Endothelial cell of umbilical vein (primary cell): ENCODE measurements at regions of chr11 and their contacts with region 1.

Region 1: DNA sequence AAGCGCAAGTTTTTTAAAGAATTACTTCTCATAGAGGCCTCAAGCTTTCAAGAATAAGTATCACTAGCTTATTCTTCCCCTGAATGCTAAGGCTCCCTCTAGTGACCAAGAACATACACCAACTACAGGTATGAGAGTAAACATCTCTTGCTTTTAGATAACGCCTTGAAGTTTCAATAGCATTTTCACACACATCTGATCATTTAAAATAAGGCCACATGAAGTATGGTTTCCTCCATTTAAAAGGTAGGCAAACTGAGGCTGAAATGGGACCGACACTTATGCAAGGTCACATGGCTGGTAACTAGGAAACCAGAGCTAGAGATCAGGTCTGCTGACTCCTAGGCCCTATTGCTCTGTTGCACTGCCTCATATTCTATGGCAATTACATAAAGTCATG is 66.5 kb downstream of the CCDC34 start:
- DNase-seq: peak; percentile 66
- H3K4me3 ChIP-seq: no peak overlapping the region
- H3K27ac ChIP-seq: no peak overlapping the region
- H3K4me1 ChIP-seq: no peaks in the 10 kb centered on the region
- H3K27me3 ChIP-seq: peaks cover 24% of the 10 kb centered on the region in 2 experiments
- CTCF ChIP-seq: peak; percentile 50 to 56
- POLR2A ChIP-seq: no peak

Region 2: DNA sequence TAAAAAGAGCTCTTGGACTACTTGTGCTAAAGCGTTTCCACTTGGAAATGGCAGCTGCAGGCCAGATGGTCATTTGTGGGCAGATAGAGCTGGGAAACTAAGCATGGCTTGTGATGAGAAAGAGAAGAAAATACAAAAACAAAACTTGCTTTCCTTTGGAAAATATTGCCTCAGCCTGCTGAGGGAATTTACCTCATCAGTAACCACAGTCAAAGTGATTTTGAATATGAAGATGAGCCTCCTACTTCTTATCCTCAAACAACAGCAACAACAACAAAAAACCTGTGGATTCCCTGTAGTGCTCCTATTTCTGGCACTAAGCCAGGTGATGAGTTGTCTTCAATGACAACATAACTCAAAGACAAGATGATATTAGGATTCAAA is 365.3 kb before region 1 on chr11:
- CTCF ChIA-PET with region 1: no interaction called
- POLR2A ChIA-PET with region 1: no interaction called
- dilution Hi-C with region 1: no loop called
- intact Hi-C with region 1: no loop called
- DNase-seq: no peak
- H3K4me3 ChIP-seq: no peak overlapping the region
- H3K27ac ChIP-seq: no peak overlapping the region
- H3K4me1 ChIP-seq: no peaks in the 10 kb centered on the region
- H3K27me3 ChIP-seq: no peaks in the 10 kb centered on the region
- CTCF ChIP-seq: no peak
- POLR2A ChIP-seq: no peak

Region 3: GRCh38 chr11:27153136-27153535 is 143.4 kb before region 1 on chr11:
- CTCF ChIA-PET with region 1: no interaction called
- POLR2A ChIA-PET with region 1: no interaction called
- dilution Hi-C with region 1: no loop called
- intact Hi-C with region 1: no loop called
- DNase-seq: no peak
- H3K4me3 ChIP-seq: no peak overlapping the region
- H3K27ac ChIP-seq: no peak overlapping the region
- H3K4me1 ChIP-seq: no peaks in the 10 kb centered on the region
- H3K27me3 ChIP-seq: no peaks in the 10 kb centered on the region
- CTCF ChIP-seq: no peak
- POLR2A ChIP-seq: no peak

Region 4: DNA sequence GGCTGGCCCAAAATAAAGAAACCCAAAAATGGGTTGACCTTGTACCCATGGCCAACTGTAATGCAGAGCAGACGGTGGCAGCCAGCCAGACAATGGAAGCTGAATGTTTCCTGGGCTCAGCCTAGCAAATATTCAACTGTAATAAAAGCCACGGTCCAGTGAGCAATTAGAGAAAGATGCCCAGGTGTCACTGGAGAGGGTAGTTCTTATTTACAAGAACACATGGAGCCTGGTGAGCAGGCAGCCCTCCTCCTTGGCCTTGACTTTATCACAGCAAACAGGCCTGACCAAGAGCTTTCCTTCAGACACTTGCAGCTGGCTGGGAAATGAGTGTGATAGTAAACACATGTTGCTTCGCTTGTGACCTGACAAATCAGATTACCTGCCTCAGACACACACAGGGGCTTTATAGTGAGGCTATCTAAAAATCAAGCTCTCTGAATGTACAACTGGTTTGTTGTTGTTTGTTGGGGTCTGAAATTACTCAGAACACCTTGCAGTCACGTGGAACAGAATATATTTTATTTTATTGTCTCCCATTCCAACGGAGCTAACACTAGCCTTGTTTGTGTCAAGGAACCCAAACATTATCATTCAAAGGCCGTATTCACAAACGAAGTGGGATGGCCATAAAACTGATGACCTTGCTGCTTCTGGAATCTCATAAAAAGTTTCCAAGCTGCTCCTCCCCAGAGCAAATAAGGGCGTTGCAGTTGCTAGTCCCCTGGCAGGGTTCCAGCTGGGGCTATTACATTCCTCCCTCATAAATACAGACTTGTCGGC is 94.9 kb before region 1 on chr11:
- CTCF ChIA-PET with region 1: interaction called, 183 read pairs
- POLR2A ChIA-PET with region 1: no interaction called
- dilution Hi-C with region 1: no loop called
- intact Hi-C with region 1: loop called (anchors 5 kb)
- DNase-seq: no peak
- H3K4me3 ChIP-seq: no peak overlapping the region
- H3K27ac ChIP-seq: no peak overlapping the region
- H3K4me1 ChIP-seq: no peaks in the 10 kb centered on the region
- H3K27me3 ChIP-seq: peaks cover 36 to 61% of the 10 kb centered on the region in 2 experiments
- CTCF ChIP-seq: no peak
- POLR2A ChIP-seq: no peak

Region 5: GRCh38 chr11:27234043-27234668 is 62.3 kb before region 1 on chr11:
- CTCF ChIA-PET with region 1: interaction called, 15 read pairs
- POLR2A ChIA-PET with region 1: no interaction called
- dilution Hi-C with region 1: no loop called
- intact Hi-C with region 1: no loop called
- DNase-seq: no peak
- H3K4me3 ChIP-seq: no peak overlapping the region
- H3K27ac ChIP-seq: no peak overlapping the region
- H3K4me1 ChIP-seq: no peaks in the 10 kb centered on the region
- H3K27me3 ChIP-seq: peaks cover 31% of the 10 kb centered on the region in 2 experiments
- CTCF ChIP-seq: no peak
- POLR2A ChIP-seq: no peak

Region 6: DNA sequence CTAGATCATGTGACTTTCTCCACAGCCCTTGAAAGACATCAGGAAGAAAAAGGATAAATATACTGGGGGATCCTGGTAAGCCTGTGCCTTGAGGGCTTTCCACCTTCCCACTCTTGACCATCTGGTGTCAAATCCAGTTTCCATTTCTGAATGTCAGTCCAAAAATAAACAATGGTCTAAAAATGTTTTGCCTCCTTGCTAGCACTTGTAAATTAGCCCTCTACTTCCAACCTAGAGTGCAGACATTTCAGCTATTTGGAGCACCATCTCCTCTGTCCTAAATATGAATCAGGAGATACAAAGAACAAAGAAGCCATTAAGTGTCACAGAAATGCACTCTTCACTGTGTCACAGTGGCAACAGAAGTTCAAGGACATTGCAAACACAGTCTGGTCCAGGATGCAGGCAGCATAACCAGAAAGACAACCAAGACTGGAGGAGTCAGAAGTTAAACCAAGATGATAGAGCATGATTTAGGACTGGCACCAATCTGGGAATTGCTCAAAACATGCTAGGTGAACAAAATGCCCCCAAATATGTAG is 21.6 kb before region 1 on chr11:
- CTCF ChIA-PET with region 1: interaction called, 13 read pairs
- POLR2A ChIA-PET with region 1: no interaction called
- dilution Hi-C with region 1: no loop called
- intact Hi-C with region 1: no loop called
- DNase-seq: no peak
- H3K4me3 ChIP-seq: no peak overlapping the region
- H3K27ac ChIP-seq: no peak overlapping the region
- H3K4me1 ChIP-seq: no peaks in the 10 kb centered on the region
- H3K27me3 ChIP-seq: peaks cover 26 to 41% of the 10 kb centered on the region in 2 experiments
- CTCF ChIP-seq: no peak
- POLR2A ChIP-seq: no peak

Region 7: DNA sequence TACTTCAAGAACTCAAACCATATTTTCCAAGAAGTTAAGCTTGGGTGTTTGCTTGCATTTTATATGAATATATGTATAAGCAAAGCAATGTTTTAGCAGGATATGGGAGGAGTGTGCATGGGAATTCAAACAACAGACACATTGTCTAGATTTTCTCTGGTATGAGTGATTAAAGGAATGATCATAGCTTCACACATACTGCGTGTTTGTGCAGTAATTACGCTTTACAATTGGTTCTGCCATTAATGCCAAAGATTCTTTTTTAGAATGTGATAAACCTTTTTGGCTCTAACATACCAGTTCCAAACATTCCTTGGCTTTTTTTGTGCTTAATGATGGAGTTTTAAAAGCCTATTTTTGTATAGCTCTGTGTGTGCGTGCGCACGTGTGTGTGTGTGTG is 12.5 kb after region 1 on chr11:
- CTCF ChIA-PET with region 1: interaction called, 36 read pairs
- POLR2A ChIA-PET with region 1: no interaction called
- dilution Hi-C with region 1: no loop called
- intact Hi-C with region 1: no loop called
- DNase-seq: no peak
- H3K4me3 ChIP-seq: no peak overlapping the region
- H3K27ac ChIP-seq: no peak overlapping the region
- H3K4me1 ChIP-seq: no peaks in the 10 kb centered on the region
- H3K27me3 ChIP-seq: peaks cover 0 to 3% of the 10 kb centered on the region in 2 experiments
- CTCF ChIP-seq: no peak
- POLR2A ChIP-seq: no peak

Region 8: GRCh38 chr11:27472398-27473016 is 176.0 kb after region 1 on chr11 and contains the start of gene LGR4:
- CTCF ChIA-PET with region 1: interaction called, 16 read pairs
- POLR2A ChIA-PET with region 1: no interaction called
- dilution Hi-C with region 1: no loop called
- intact Hi-C with region 1: no loop called
- DNase-seq: peak; percentile 96
- H3K4me3 ChIP-seq: peak within 1 kb of the TSS; percentile 44 to 94 (median 73)
- H3K27ac ChIP-seq: no peak within 1 kb of the TSS
- H3K4me1 ChIP-seq: peaks cover 14% of the 10 kb centered on the region
- H3K27me3 ChIP-seq: peaks cover 0 to 2% of the 10 kb centered on the region in 2 experiments
- CTCF ChIP-seq: no peak
- POLR2A ChIP-seq: peak; percentile 52
- total RNA-seq, gene LGR4: 2.6 and 3.1 TPM in 2 replicates

Region 9: DNA sequence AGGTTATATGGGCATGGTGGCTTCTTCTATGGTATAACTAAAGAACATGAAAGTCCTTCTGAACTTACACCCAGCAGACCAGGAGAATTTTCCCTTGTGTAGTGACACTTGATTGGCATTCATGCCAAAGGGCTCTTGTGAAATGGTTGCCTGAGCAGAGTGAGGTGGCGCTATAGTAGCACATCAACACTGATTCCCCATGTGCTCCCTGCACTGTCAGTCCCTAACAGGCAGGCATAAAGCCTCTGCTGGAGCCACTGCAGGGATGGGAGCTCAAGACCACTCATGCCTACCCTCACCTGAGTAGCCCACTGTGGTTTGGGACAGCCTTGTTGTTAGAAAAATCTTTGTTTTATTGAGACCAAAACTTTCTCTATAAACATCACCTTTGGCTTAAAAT is 302.7 kb after region 1 on chr11:
- CTCF ChIA-PET with region 1: no interaction called
- POLR2A ChIA-PET with region 1: no interaction called
- dilution Hi-C with region 1: no loop called
- intact Hi-C with region 1: no loop called
- DNase-seq: no peak
- H3K4me3 ChIP-seq: no peak overlapping the region
- H3K27ac ChIP-seq: no peak overlapping the region
- H3K4me1 ChIP-seq: no peaks in the 10 kb centered on the region
- H3K27me3 ChIP-seq: no peaks in the 10 kb centered on the region
- CTCF ChIP-seq: no peak
- POLR2A ChIP-seq: no peak